HepG2 (cell line): ENCODE measurements at regions of chr2 and their contacts with region 1.

Region 1: GRCh38 chr2:62705007-62705829 is at the start of gene EHBP1:
- DNase-seq: peak; percentile 100
- ATAC-seq: peak; percentile 94
- H3K4me3 ChIP-seq: peak within 1 kb of the TSS; percentile 77 to 97 (median 94)
- H3K27ac ChIP-seq: peak within 1 kb of the TSS; percentile 70
- H3K4me1 ChIP-seq: peaks cover 19% of the 10 kb centered on the region
- H3K27me3 ChIP-seq: no peaks in the 10 kb centered on the region; a peak in 1 of 5 replicates
- CTCF ChIP-seq: no peak; the same call in 1 of the 2 replicates
- EP300 ChIP-seq: peak in 1 of 2 experiments; percentile 7; a peak in 2 of 4 replicates
- POLR2A ChIP-seq: peak; percentile 91 to 99
- RAD21 ChIP-seq: peak; percentile 56
- total RNA-seq, gene EHBP1: 93.5 and 122 TPM in 2 replicates

Region 2: GRCh38 chr2:62489162-62489561 is 216.1 kb before region 1 on chr2:
- CTCF ChIA-PET with region 1: no interaction called
- POLR2A ChIA-PET with region 1: interaction called, 10 read pairs
- in situ Hi-C with region 1: no loop called
- intact Hi-C with region 1: no loop called
- DNase-seq: no peak
- ATAC-seq: no peak
- H3K4me3 ChIP-seq: no peak overlapping the region
- H3K27ac ChIP-seq: peak overlapping the region; percentile 34
- H3K4me1 ChIP-seq: peaks cover 69% of the 10 kb centered on the region
- H3K27me3 ChIP-seq: no peaks in the 10 kb centered on the region
- CTCF ChIP-seq: no peak
- EP300 ChIP-seq: no peak
- POLR2A ChIP-seq: no peak
- RAD21 ChIP-seq: no peak

Region 3: GRCh38 chr2:62540408-62541168 is 164.6 kb before region 1 on chr2:
- CTCF ChIA-PET with region 1: no interaction called
- POLR2A ChIA-PET with region 1: interaction called, 11 read pairs
- in situ Hi-C with region 1: no loop called
- intact Hi-C with region 1: no loop called
- DNase-seq: peak; percentile 94
- ATAC-seq: peak; percentile 98
- H3K4me3 ChIP-seq: peak overlapping the region in 1 of 3 experiments; percentile 8; a peak in 1 of 6 replicates
- H3K27ac ChIP-seq: peak overlapping the region; percentile 84
- H3K4me1 ChIP-seq: peaks cover 69% of the 10 kb centered on the region
- H3K27me3 ChIP-seq: no peaks in the 10 kb centered on the region
- CTCF ChIP-seq: no peak
- EP300 ChIP-seq: peak in 1 of 2 experiments; percentile 82; a peak in 2 of 4 replicates
- POLR2A ChIP-seq: peak in 1 of 2 experiments; percentile 35; a peak in 1 of 4 replicates
- RAD21 ChIP-seq: peak; percentile 19; the same call in 1 of the 2 replicates

Region 4: GRCh38 chr2:62641410-62641843 is 63.8 kb before region 1 on chr2:
- CTCF ChIA-PET with region 1: no interaction called
- POLR2A ChIA-PET with region 1: interaction called, 9 read pairs
- in situ Hi-C with region 1: no loop called
- intact Hi-C with region 1: loop called (anchors 5 kb)
- DNase-seq: no peak
- ATAC-seq: no peak
- H3K4me3 ChIP-seq: no peak overlapping the region; a peak in 1 of 6 replicates
- H3K27ac ChIP-seq: peak overlapping the region; percentile 50
- H3K4me1 ChIP-seq: peaks cover 42% of the 10 kb centered on the region
- H3K27me3 ChIP-seq: no peaks in the 10 kb centered on the region
- CTCF ChIP-seq: no peak
- EP300 ChIP-seq: peak in 1 of 2 experiments; percentile 46; a peak in 1 of 4 replicates
- POLR2A ChIP-seq: no peak
- RAD21 ChIP-seq: no peak

Region 5: DNA sequence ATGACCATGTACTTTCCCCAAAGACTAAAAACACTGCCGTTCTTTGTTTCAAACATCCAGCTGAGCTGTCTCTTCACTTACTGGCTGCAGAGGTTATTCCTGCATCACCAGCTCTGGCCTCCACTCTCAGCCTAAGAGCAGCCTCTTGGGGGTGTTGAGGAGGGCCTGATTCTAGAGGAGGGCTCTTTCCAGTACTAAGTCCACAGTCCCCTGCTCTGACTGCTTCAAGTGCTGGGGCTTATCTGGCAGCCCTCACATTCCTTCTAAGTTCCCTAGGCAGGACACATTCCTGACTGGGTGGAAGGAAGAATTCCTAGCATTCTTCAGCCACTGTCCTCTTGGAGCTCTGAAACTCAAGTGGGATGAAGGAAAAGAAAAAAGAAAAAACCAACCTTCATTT is 32.6 kb before region 1 on chr2:
- CTCF ChIA-PET with region 1: no interaction called
- POLR2A ChIA-PET with region 1: interaction called, 7 read pairs
- in situ Hi-C with region 1: no loop called
- intact Hi-C with region 1: loop called (anchors 1 kb)
- DNase-seq: peak; percentile 83
- ATAC-seq: peak; percentile 95
- H3K4me3 ChIP-seq: no peak overlapping the region
- H3K27ac ChIP-seq: no peak overlapping the region
- H3K4me1 ChIP-seq: peaks cover 43% of the 10 kb centered on the region
- H3K27me3 ChIP-seq: no peaks in the 10 kb centered on the region
- CTCF ChIP-seq: no peak
- EP300 ChIP-seq: peak in 1 of 2 experiments; percentile 69; a peak in 1 of 4 replicates
- POLR2A ChIP-seq: no peak
- RAD21 ChIP-seq: no peak

Region 6: DNA sequence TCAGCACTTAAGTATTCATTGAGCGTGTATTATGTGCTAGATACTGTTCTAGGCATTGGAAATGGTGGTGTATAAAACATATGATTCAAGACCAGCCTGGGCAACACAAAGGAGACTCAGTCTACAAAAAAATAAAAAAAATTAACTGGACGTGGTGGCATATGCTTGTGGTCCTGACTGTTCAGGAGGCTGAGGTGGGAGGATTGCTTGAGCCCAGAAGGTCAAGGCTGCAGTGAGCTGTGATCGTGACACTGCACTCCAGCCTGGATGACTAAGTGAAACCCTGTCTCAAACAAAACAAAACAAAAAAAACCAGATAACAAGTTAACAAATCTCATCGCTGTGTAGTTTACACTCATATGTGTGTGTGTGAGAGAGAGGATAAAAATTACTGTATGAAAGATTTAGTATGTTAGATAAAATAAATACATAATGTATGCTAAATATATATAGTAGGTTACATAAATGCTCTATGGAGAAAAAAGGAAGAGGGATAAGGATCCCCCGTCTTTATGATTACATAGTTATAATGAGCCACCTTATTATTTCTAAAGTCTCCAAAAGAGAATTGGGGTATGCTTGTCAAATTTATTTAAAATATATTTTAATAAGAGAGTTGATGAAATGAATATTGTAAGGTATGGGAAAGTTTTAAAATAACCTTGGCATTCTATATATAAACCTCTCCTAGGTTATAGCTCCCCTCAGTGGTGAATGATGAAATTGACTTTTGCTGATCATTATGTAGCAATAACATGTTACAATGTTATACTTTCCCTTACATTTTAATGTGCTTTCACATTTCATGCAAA is 69.5 kb after region 1 on chr2:
- CTCF ChIA-PET with region 1: interaction called, 3 read pairs
- POLR2A ChIA-PET with region 1: interaction called, 5 read pairs
- in situ Hi-C with region 1: no loop called
- intact Hi-C with region 1: loop called (anchors 2 kb)
- DNase-seq: peak; percentile 78
- ATAC-seq: peak; percentile 85
- H3K4me3 ChIP-seq: no peak overlapping the region
- H3K27ac ChIP-seq: peak overlapping the region; percentile 41
- H3K4me1 ChIP-seq: peaks cover 23% of the 10 kb centered on the region
- H3K27me3 ChIP-seq: no peaks in the 10 kb centered on the region
- CTCF ChIP-seq: peak; percentile 73
- EP300 ChIP-seq: peak in 1 of 2 experiments; percentile 52; a peak in 2 of 4 replicates
- POLR2A ChIP-seq: no peak
- RAD21 ChIP-seq: peak; percentile 75